ENCODE measurements at regions of chr12 and their contacts with region 1.

Region 1: GRCh38 chr12:105041186-105041585 is 43.1 kb downstream of the ALDH1L2 start:
- DNase-seq: no peak
- H3K4me3 ChIP-seq: no peak overlapping the region
- H3K27ac ChIP-seq: no peak overlapping the region
- H3K4me1 ChIP-seq: peaks cover 9% of the 10 kb centered on the region
- H3K27me3 ChIP-seq: no peaks in the 10 kb centered on the region
- CTCF ChIP-seq: no peak

Region 2: DNA sequence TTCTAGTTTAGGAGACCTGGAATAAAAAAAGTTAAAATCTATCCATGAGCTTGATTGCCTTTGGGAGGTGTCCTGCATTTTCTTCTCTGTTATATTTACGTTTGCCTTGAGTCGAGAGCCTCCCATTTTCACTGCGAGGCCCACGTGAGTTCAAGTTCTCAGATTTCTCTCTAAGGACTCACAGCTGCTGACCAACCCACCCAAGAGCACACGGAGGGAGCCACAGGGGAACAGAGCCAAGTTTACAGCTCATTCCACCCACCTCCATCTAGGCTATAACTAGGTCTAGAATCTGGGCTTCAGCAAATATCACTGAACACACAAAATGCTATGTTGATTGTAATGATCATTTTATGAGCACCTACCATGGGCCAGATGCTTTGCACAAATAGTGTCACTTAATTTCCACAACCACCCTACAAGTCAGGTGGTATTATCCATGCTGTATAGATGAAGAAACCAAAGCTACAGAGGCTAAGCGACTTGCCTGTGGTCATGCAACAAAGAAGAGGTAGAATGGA is 26.4 kb after region 1 on chr12:
- CTCF ChIA-PET with region 1: no interaction called
- dilution Hi-C with region 1: no loop called
- in situ Hi-C with region 1: no loop called
- intact Hi-C with region 1: no loop called
- DNase-seq: no peak
- H3K4me3 ChIP-seq: no peak overlapping the region
- H3K27ac ChIP-seq: no peak overlapping the region
- H3K4me1 ChIP-seq: no peaks in the 10 kb centered on the region
- H3K27me3 ChIP-seq: no peaks in the 10 kb centered on the region
- CTCF ChIP-seq: no peak

Region 3: DNA sequence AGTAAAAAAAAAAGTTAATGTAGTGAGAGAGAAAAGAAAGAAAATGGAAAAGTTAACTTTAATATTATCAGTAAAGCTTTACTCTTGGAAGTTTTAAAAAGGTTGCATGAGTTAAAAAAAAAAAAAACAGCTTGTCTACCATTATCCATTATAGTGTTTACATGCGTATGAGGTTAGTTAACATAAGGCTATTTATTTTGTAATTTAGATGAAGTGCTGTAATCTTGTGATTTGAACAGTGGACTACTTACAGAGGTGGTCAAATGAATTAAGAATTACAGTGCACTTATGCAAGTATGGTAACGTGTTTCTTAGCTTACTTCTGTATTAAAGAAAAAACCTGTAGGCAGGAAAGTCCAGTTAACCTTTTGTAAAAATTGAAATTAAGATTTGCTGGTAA is 97.1 kb after region 1 on chr12:
- CTCF ChIA-PET with region 1: no interaction called
- dilution Hi-C with region 1: no loop called
- in situ Hi-C with region 1: no loop called
- intact Hi-C with region 1: loop called (anchors 5 kb)
- DNase-seq: no peak
- H3K4me3 ChIP-seq: no peak overlapping the region
- H3K27ac ChIP-seq: no peak overlapping the region
- H3K4me1 ChIP-seq: peaks cover 3% of the 10 kb centered on the region
- H3K27me3 ChIP-seq: no peaks in the 10 kb centered on the region
- CTCF ChIP-seq: no peak

Region 4: GRCh38 chr12:105245291-105245690 is 204.1 kb after region 1 on chr12:
- CTCF ChIA-PET with region 1: no interaction called
- dilution Hi-C with region 1: no loop called
- in situ Hi-C with region 1: no loop called
- intact Hi-C with region 1: no loop called
- DNase-seq: no peak
- H3K4me3 ChIP-seq: no peak overlapping the region
- H3K27ac ChIP-seq: no peak overlapping the region
- H3K4me1 ChIP-seq: no peaks in the 10 kb centered on the region
- H3K27me3 ChIP-seq: no peaks in the 10 kb centered on the region
- CTCF ChIP-seq: no peak